ENCODE measurements at regions of chr2 and their contacts with region 1.

Region 1: DNA sequence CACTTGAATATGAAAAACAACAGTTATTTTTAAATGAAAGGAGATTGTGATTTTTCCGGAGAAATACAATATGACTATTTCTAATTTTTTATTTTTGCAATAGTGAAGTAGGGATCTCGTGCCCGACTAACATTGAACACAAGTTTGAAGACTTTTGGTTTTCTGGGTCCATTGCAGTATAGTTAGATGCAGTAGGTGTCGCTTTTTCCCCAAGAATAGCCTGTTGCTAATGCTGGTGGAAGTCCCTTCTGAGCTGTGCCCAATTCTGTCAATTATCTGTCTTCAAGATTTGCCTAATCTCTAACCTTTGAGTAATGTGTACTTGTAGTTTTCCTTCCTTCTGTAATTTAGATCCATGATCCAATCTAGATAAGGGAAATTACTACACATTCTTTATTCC is 36.5 kb downstream of the SEMA4F start:
- DNase-seq: peak; percentile 51 to 67 (median 63)
- H3K4me3 ChIP-seq: no peak overlapping the region
- H3K4me3 Mint-ChIP-seq: no peak overlapping the region
- H3K27ac ChIP-seq: no peak overlapping the region
- H3K27ac Mint-ChIP-seq: no peak overlapping the region
- H3K4me1 ChIP-seq: peaks cover 18 to 19% of the 10 kb centered on the region in 2 donors
- H3K4me1 Mint-ChIP-seq: peaks cover 16% of the 10 kb centered on the region
- H3K27me3 ChIP-seq: peaks cover 2 to 5% of the 10 kb centered on the region in 2 donors
- H3K27me3 Mint-ChIP-seq: peaks cover 0 to 7% (median 0%) of the 10 kb centered on the region in 3 donors
- CTCF ChIP-seq: peak; percentile 83

Region 2: DNA sequence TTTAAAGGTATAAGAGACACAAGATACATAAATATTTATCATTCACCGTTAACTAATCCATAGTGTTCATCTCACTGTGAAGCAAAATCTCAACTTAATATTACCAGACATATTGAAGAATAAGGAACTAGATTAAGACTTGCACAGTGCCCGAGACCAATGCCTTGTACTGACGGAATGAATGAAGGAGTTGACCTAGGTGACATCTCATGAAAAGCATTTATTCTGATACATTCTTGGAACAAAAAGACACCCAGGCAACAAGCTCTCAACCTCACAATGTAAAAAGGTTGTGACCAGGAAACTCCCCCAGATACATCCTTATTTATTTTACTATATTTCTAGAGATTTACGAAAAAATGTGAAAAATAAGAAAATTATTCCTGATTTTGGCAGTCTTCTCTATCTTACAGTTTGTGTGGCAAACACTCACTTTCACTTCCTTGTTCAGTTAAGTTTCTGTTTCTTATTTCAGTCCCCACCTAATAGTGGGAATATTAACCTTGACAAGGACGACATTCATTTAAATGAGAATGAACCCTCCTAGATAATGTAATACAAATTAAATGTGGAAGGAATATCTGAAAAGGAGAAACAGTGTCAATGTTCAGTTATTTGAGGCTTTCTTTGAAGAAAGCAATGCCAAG is 70.8 kb before region 1 on chr2:
- intact Hi-C with region 1: no loop called
- DNase-seq: peak; percentile 14 to 50 (median 40)
- H3K4me3 ChIP-seq: peak overlapping the region in 1 of 3 experiments; percentile 41
- H3K4me3 Mint-ChIP-seq: peak overlapping the region in 1 of 2 donors; percentile 35
- H3K27ac ChIP-seq: peak overlapping the region in 1 of 2 donors; percentile 62
- H3K27ac Mint-ChIP-seq: peak overlapping the region; percentile 14 to 86 (median 35)
- H3K4me1 ChIP-seq: peaks cover 19 to 20% of the 10 kb centered on the region in 2 donors
- H3K4me1 Mint-ChIP-seq: peaks cover 21% of the 10 kb centered on the region
- H3K27me3 ChIP-seq: no peaks in the 10 kb centered on the region
- H3K27me3 Mint-ChIP-seq: peaks cover 2 to 4% (median 3%) of the 10 kb centered on the region in 3 donors
- CTCF ChIP-seq: no peak

Region 3: GRCh38 chr2:75632091-75632701 is 941.6 kb after region 1 on chr2:
- intact Hi-C with region 1: loop called in 1 of 2 experiments (anchors 10 kb)
- DNase-seq: no peak
- H3K4me3 ChIP-seq: no peak overlapping the region
- H3K4me3 Mint-ChIP-seq: no peak overlapping the region
- H3K27ac ChIP-seq: no peak overlapping the region
- H3K27ac Mint-ChIP-seq: peak overlapping the region in 1 of 7 donors; percentile 63
- H3K4me1 ChIP-seq: no peaks in the 10 kb centered on the region
- H3K4me1 Mint-ChIP-seq: no peaks in the 10 kb centered on the region
- H3K27me3 ChIP-seq: peaks cover 0 to 2% of the 10 kb centered on the region in 2 donors
- H3K27me3 Mint-ChIP-seq: peaks cover 4 to 9% (median 6%) of the 10 kb centered on the region in 3 donors
- CTCF ChIP-seq: no peak